ENCODE measurements at regions of chr12 and their contacts with region 1.

Region 1: DNA sequence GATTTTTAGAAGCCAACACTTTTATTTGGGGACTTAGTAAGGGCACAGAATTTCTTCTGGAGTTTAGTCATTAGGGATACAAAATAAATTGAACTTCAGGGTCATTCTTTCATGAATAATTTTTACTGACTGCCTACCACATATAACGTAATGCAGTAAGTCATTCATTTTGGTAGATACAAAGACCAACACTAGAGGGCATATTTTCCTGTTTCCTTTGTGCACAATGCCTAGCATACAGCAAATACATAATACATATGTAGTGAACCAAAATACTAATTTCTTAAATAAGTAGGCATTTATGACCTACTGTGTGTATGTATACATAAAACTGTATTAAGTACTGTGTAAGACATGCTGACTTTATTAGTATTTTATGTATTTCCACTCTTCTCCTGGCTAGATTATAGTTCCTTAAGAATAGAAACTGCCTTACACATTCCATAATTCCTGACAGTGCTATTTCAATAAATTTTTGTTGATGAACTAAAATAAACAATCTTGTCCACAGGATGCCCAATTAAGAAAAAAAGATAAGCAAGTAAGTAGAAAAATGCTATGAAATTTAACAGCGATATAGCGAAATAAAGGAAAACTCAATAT is 47.9 kb downstream of the PPP1R12A start:
- DNase-seq: no peak

Region 2: DNA sequence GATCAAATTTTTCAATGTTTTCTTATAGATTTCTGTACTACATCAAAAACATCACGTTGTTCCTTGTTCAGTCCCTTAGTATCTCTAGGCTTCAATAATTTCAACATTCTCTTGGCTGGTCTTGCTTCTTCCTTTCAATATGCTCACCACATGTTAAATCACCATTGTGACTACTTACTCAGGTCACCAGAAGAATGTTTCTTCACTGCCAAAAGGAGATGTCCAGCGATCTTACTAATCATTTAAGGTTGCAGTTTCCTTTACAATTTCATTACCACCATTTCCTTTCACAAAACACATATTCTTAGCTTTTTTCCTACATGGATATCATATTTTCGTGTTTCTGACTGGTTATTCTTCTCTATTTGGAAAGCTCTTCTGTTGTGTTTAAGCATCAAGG is 1692.6 kb before region 1 on chr12:
- intact Hi-C with region 1: no loop called
- DNase-seq: no peak

Region 3: GRCh38 chr12:79782197-79782900 is 104.7 kb before region 1 on chr12:
- intact Hi-C with region 1: no loop called
- DNase-seq: no peak

Region 4: GRCh38 chr12:79834712-79835376 is 52.2 kb before region 1 on chr12:
- intact Hi-C with region 1: no loop called
- DNase-seq: no peak

Region 5: DNA sequence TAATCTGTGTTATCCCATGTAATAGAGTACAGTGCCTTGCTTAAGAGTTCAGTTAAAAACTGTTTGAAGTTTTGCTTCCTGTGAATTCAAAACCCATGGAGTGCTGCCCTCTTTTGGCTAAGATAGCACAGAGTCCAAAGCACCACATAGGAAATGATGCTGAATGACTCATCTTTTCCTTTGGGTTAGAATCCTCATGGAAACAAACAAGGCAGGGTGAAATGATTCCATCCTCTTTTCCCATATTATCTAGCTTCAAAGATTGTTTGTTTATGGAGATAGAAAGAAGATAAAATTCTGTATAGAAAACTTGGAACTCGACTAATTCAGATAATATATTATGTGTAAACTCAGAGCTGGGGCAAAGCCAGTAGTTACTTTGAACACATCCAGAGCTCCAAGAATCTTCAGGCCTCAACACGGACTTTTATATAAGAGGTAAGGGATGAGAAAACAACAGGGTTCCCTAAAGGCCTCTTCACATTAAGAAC is 299.8 kb after region 1 on chr12:
- intact Hi-C with region 1: loop called (anchors 10 kb)
- DNase-seq: peak in 2 of 10 donors; percentile 12 to 21